ENCODE measurements at regions of chr19 and their contacts with region 1.

Region 1: DNA sequence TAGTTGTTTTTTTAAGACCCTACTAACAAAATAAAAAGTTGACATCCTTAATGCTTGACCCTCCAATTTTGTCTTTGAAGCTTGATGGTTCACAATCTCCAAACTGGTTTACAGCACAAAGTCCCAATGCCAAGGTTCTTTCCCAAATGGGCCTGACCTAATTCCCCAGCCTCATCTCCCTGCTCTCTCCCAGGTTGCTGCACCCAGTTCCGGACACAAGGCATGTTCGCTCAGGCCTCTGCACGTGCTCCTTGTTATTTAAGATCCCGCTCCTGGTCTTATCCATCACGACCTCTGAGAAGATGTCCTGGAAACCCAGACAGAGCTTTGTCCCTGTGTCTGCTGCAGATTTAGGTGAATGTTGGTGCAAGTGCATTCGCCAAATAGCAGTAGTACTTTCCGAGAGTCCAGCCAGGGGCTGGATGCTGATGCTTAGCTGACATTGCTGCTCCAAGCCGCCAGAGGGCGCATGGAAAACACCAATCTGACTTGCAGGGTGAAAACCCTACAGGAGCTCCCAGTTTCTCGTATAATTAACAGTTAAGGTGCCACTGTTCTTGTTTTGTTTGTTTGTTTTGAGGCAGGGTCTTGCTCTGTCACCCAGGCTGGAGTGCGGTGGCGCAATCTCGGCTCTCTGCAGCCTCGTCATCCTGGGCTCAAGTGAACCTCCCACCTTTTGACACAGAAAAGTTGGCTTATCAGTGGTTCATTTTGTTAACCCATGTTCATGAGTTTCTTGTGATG is 18.5 kb downstream of the LYPD3 start:
- DNase-seq: no peak
- H3K4me3 ChIP-seq: no peak overlapping the region
- H3K27ac ChIP-seq: no peak overlapping the region
- H3K27me3 ChIP-seq: no peaks in the 10 kb centered on the region
- CTCF ChIP-seq: peak; percentile 95

Region 2: DNA sequence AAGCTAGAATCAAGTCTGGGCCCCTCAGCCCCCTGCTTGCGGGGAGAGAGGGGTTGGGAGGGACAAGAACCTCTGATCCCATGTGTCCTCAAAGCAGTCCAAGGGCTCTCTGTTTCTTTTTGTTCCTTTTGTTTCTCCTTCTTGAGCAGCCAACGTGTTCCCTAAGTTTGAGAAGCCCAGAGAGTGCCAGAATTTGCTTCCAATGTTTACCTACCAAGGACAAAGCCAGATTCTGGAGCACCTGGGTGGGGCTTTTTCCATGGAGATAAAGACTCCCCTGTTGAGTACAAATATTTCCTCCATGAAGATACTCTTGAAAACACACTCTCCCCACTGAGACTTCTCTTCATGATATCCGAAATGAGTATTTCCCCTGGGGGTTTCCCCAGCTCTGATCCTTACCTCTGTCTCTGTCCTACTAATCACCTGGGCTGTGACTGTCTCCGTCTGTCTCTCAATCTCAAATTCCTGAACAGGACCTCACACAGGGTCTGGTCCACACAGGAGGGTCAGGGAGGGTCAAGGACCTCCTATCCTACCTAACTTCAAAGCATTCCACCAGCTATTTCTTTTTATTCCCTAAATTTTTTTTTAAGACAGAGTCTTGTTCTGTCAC is 66.0 kb before region 1 on chr19:
- CTCF ChIA-PET with region 1: no interaction called
- POLR2A ChIA-PET with region 1: no interaction called
- DNase-seq: no peak
- H3K4me3 ChIP-seq: no peak overlapping the region
- H3K27ac ChIP-seq: no peak overlapping the region
- H3K27me3 ChIP-seq: peaks cover 18% of the 10 kb centered on the region
- CTCF ChIP-seq: no peak

Region 3: GRCh38 chr19:43457809-43458208 is 10.9 kb after region 1 on chr19:
- CTCF ChIA-PET with region 1: interaction called, 26 read pairs
- POLR2A ChIA-PET with region 1: no interaction called
- DNase-seq: no peak
- H3K4me3 ChIP-seq: no peak overlapping the region
- H3K27ac ChIP-seq: no peak overlapping the region
- H3K27me3 ChIP-seq: peaks cover 16% of the 10 kb centered on the region
- CTCF ChIP-seq: no peak

Region 4: DNA sequence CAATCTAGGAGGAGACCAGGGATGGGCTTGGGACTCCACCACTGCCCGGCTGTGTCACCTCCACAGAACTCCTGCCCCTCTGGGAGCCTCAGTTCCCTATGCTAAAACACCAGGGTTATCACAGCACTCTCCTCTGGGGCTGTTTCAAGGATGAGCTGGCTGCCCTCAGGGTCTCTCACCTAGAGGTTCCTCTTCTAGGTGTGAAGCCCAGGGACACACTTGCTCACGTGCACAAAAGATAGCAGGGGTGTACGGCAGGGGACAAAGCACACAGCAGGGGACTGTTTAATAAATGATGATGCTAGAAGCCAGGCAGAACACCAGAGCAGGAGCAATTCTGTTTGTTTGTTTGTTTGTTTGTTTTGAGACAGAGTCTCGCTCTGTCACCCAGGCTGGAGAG is 35.3 kb after region 1 on chr19:
- CTCF ChIA-PET with region 1: interaction called, 12 read pairs
- POLR2A ChIA-PET with region 1: no interaction called
- DNase-seq: no peak
- H3K4me3 ChIP-seq: no peak overlapping the region
- H3K27ac ChIP-seq: no peak overlapping the region
- H3K27me3 ChIP-seq: no peaks in the 10 kb centered on the region
- CTCF ChIP-seq: no peak

Region 5: GRCh38 chr19:43511324-43511723 is 64.4 kb after region 1 on chr19:
- CTCF ChIA-PET with region 1: interaction called, 385 read pairs
- POLR2A ChIA-PET with region 1: no interaction called
- DNase-seq: no peak
- H3K4me3 ChIP-seq: no peak overlapping the region
- H3K27ac ChIP-seq: no peak overlapping the region
- H3K27me3 ChIP-seq: no peaks in the 10 kb centered on the region
- CTCF ChIP-seq: no peak

Region 6: GRCh38 chr19:43526884-43527859 is 80.3 kb after region 1 on chr19 and contains the start of gene ETHE1:
- CTCF ChIA-PET with region 1: interaction called, 385 read pairs
- POLR2A ChIA-PET with region 1: no interaction called
- DNase-seq: no peak
- H3K4me3 ChIP-seq: peak within 1 kb of the TSS; percentile 86
- H3K27ac ChIP-seq: peak within 1 kb of the TSS; percentile 57
- H3K27me3 ChIP-seq: no peaks in the 10 kb centered on the region
- CTCF ChIP-seq: no peak
- polyA plus RNA-seq, gene ETHE1: 104 and 130 TPM in 2 replicates

Region 7: DNA sequence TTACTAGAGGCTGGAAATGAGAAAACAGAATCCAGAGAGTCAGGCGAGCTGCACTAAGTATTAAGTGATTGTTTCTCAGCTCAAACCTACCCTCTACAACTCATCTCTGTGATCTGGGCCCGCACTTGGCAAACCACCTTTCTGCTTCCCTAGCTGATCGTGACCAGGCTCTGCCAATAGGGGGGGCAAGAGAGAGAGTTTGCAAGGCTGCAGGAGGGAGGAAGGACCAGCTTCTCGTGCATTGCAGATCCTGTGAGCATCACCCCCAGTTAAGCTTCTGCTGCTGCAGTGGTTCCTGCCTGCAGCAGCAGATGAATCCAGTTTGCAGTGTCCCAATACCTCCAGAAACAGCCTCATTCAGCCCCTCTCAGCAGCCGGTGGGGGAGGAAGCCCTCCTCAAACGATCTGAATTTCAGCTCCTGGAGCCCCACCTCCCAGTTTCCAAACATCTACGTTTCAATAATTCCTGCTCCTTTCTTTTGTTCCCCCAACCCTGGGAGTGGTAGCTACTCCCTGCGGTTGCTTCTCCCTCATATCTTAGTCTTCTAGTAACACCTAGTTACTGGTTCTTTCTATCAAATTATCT is 108.4 kb after region 1 on chr19:
- CTCF ChIA-PET with region 1: interaction called, 13 read pairs
- POLR2A ChIA-PET with region 1: no interaction called
- DNase-seq: no peak
- H3K4me3 ChIP-seq: no peak overlapping the region
- H3K27ac ChIP-seq: no peak overlapping the region
- H3K27me3 ChIP-seq: no peaks in the 10 kb centered on the region
- CTCF ChIP-seq: peak; percentile 89

Measured in AG04450 (cell line).